PC-9 (cell line): ENCODE measurements at regions of chr6 and their contacts with region 1.

Region 1: DNA sequence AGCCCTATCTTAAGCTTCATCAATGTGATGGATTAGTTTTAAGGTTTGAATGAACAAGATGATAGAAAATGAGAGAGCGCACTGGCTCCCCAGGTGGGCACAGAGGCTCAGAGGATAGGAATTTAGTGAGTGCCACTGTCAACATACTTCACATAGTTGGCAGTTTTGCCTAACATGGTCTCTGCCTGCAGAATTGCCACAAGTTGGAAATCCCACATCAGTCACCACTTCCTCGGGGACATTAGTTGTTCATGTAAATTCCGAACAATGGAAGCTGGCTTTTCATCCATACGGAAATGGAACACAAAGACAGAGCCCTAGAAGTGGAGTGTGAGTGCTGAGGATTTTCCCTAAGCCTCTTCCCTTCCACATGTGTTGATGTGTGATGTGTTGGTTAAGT is 123.9 kb upstream of the PHACTR1 start:
- DNase-seq: peak; percentile 53 to 85
- H3K4me3 ChIP-seq: no peak overlapping the region
- H3K27ac ChIP-seq: no peak overlapping the region
- H3K4me1 ChIP-seq: peaks cover 19% of the 10 kb centered on the region
- H3K27me3 ChIP-seq: no peaks in the 10 kb centered on the region
- CTCF ChIP-seq: no peak

Region 2: GRCh38 chr6:12545619-12546409 is 46.8 kb before region 1 on chr6:
- CTCF ChIA-PET with region 1: no interaction called
- POLR2A ChIA-PET with region 1: no interaction called
- intact Hi-C with region 1: loop called (anchors 5 kb)
- DNase-seq: peak; percentile 11 to 92
- H3K4me3 ChIP-seq: no peak overlapping the region
- H3K27ac ChIP-seq: peak overlapping the region; percentile 0; the same call in 1 of the 2 replicates
- H3K4me1 ChIP-seq: peaks cover 16% of the 10 kb centered on the region
- H3K27me3 ChIP-seq: no peaks in the 10 kb centered on the region
- CTCF ChIP-seq: no peak

Region 3: DNA sequence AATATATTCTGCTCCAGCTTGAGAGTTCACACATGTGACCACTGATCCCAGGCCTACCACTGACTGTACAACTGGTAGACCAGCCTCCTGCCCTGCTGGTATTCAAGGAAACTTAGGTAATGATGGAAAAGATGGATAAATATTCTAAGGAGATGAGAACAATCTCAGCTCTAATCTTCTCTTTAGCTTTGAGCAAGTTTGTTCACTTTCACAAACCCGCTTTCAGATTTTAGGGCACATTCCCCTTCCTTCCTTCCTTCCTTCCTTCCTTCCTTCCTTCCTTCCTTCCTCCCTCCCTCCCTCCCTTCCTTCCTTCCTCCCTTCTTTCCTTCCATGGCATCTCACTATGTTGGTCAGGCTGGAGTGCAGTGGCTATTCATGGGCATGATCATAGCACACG is 35.7 kb after region 1 on chr6:
- CTCF ChIA-PET with region 1: no interaction called
- POLR2A ChIA-PET with region 1: no interaction called
- intact Hi-C with region 1: no loop called
- DNase-seq: peak in 1 of 2 experiments; percentile 11
- H3K4me3 ChIP-seq: no peak overlapping the region
- H3K27ac ChIP-seq: no peak overlapping the region
- H3K4me1 ChIP-seq: no peaks in the 10 kb centered on the region
- H3K27me3 ChIP-seq: peaks cover 5% of the 10 kb centered on the region
- CTCF ChIP-seq: no peak

Region 4: DNA sequence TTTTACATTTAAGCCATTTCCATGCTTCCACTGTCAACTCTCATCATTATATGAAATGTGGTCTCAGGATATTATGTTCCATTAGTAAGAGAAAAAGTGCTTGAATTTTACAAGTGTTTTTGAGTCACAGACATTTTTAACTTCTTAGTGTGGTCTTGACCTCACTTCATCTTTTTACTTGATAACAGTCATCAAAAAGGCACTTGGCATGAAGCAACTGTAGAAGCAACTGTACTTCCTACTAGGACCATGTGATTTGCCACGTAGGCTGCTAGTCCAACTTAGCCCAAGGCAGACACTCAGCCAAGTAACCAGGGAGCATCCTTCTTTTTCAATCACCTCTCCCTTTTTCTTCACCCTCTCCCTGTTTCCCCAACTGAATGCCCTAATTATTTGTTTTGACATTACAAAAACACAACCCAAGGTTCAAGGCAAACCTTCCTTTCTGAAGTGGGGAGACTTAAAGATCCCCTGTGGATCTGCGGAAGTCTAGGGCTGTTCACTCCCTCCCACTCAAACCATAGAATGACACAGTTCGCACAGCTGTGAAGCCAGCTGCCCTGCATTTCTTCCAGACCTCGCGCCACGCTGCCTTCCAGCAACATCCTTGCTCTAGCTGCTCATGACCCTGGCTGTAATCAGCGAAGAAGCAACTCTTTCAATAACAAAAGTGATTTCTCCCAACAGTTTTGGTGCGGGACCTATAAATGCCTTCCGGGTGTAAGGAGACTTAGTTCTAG is 168.9 kb after region 1 on chr6:
- CTCF ChIA-PET with region 1: no interaction called
- POLR2A ChIA-PET with region 1: no interaction called
- intact Hi-C with region 1: no loop called
- DNase-seq: no peak
- H3K4me3 ChIP-seq: no peak overlapping the region
- H3K27ac ChIP-seq: no peak overlapping the region
- H3K4me1 ChIP-seq: no peaks in the 10 kb centered on the region
- H3K27me3 ChIP-seq: peaks cover 30% of the 10 kb centered on the region
- CTCF ChIP-seq: no peak